ENCODE measurements at regions of chr4 and their contacts with region 1.

Region 1: DNA sequence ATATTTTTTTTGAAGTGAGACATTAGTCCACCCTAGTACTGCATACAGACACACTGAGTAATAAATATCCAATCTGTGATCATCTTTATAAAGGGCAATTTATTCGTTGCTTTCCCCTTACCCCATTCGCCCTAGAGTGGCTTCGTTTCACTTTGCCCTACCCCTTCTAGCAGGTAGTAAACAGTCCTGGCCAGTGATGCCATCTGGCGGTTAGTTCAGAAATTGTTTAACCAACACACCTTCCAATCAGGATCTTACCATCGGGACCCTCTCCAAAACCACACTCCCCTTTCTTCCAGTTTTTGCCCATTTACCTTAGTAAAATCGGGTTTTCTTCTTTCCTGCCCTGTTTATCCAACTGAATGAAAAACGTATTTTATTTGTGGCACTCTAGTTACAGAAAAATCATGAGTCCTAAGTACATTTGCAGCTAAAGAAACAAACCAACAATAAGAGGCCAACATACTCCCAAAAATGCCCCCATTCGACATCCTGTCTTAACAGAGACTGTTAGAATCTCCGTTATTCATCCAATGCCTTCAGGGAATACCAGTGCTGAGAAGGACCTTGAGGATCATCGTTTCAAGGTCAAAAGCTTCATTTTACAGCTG is 2.2 kb downstream of the PPA2 start:
- DNase-seq: peak; percentile 66
- ATAC-seq: peak; percentile 61
- H3K4me3 ChIP-seq: peak overlapping the region; percentile 93
- H3K27ac ChIP-seq: peak overlapping the region; percentile 92
- H3K4me1 ChIP-seq: no peaks in the 10 kb centered on the region
- H3K27me3 ChIP-seq: no peaks in the 10 kb centered on the region
- CTCF ChIP-seq: peak; percentile 71 to 83 (median 74)
- EP300 ChIP-seq: no peak
- POLR2A ChIP-seq: no peak
- RAD21 ChIP-seq: peak; percentile 95

Region 2: DNA sequence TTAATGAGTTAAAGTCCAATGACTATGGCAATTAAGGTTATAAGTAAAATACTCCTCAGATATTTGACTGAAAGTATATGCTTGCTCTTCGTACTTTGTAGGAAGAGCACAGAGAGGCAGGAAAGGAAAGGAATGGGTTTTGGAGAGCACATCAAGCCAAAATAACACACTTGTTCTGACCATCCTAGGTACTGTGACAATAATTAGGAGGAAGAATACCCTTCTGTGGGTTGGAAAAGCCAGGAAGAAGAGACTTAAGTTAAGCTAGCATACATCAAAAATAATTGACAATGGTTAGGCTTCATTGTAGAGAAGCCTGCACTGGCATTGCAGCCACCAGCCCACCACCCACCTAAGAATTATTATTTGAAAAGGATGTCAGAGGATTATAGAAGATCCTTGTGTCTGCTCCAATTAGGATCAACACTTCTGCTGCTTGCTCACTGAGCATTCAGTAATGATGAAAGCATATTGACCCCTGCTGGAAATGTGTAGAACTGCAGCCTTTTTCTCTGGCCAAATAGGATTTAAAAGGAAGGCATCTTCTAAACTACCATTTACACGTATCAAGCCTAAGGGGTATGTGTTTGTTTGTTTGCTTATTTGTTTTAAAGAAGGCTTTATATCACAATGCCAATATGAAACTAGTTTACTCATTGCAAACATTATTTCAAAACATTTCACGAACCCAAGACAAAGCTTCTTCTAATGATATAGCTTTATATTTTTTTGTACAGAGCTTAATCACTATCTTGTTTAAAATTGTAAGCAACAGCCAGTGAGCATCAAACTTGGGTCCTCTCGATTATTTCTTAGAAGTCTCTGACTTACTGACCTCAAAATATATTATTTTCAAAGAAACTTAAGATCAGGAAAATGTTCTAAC is 611.2 kb before region 1 on chr4:
- CTCF ChIA-PET with region 1: interaction called, 6 read pairs
- POLR2A ChIA-PET with region 1: no interaction called
- RAD21 ChIA-PET with region 1: no interaction called
- SMC1A ChIA-PET with region 1: interaction called, 4 read pairs
- in situ Hi-C with region 1: no loop called
- intact Hi-C with region 1: loop called (anchors 2 kb)
- DNase-seq: peak; percentile 72
- ATAC-seq: peak; percentile 94
- H3K4me3 ChIP-seq: no peak overlapping the region
- H3K27ac ChIP-seq: no peak overlapping the region
- H3K4me1 ChIP-seq: no peaks in the 10 kb centered on the region
- H3K27me3 ChIP-seq: no peaks in the 10 kb centered on the region
- CTCF ChIP-seq: peak; percentile 74 to 96 (median 90); a peak in 5 of 6 replicates
- EP300 ChIP-seq: no peak
- POLR2A ChIP-seq: no peak
- RAD21 ChIP-seq: peak; percentile 100

Region 3: GRCh38 chr4:105061136-105061696 is 410.5 kb before region 1 on chr4:
- CTCF ChIA-PET with region 1: interaction called, 5 read pairs
- POLR2A ChIA-PET with region 1: no interaction called
- RAD21 ChIA-PET with region 1: interaction called, 3 read pairs
- SMC1A ChIA-PET with region 1: interaction called, 3 read pairs
- in situ Hi-C with region 1: loop called (anchors 5 kb)
- intact Hi-C with region 1: loop called (anchors 2 kb)
- DNase-seq: peak; percentile 85
- ATAC-seq: peak; percentile 68
- H3K4me3 ChIP-seq: peak overlapping the region; percentile 45
- H3K27ac ChIP-seq: peak overlapping the region; percentile 94
- H3K4me1 ChIP-seq: peaks cover 47% of the 10 kb centered on the region
- H3K27me3 ChIP-seq: no peaks in the 10 kb centered on the region
- CTCF ChIP-seq: no peak
- EP300 ChIP-seq: peak in 1 of 2 experiments; percentile 50; a peak in 2 of 4 replicates
- POLR2A ChIP-seq: no peak
- RAD21 ChIP-seq: 0 out of 2 replicates have a peak, but pooled peaks have one; percentile 9

Region 4: DNA sequence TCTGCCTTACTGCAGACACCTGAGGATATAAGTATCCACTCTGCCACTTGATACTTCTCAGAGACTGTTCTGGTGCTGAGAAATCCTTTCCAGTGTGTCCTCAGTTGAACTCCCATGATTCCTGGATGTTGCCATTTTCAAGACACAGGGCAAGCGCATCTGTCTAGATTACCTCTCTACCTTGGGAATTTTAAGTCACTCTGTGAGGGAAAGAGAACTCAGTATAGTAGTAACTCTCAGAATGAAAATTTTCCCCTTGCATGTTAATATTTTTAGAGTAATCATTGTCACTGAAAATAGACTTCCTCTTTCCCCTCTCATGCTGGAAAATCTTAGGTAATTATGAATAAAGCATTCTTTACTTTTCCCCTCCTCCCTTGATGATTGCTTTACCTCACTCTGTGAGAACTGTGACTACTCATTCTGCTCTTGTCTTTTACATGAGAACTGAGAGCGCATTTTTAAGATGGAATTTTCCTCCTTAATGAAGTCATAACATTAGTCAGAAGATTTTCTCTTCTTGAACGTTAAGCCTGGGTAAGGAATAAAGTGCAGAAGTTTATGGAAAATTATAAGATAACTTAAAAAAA is 280.0 kb before region 1 on chr4:
- CTCF ChIA-PET with region 1: interaction called, 10 read pairs
- POLR2A ChIA-PET with region 1: interaction called, 5 read pairs
- RAD21 ChIA-PET with region 1: interaction called, 6 read pairs
- SMC1A ChIA-PET with region 1: interaction called, 3 read pairs
- in situ Hi-C with region 1: no loop called
- intact Hi-C with region 1: loop called (anchors 5 kb)
- DNase-seq: peak; percentile 81
- ATAC-seq: peak; percentile 65
- H3K4me3 ChIP-seq: 0 out of 2 replicates have a peak overlapping the region, but pooled peaks have one; percentile 10
- H3K27ac ChIP-seq: peak overlapping the region; percentile 81
- H3K4me1 ChIP-seq: peaks cover 46% of the 10 kb centered on the region
- H3K27me3 ChIP-seq: no peaks in the 10 kb centered on the region
- CTCF ChIP-seq: no peak
- EP300 ChIP-seq: peak in 1 of 2 experiments; percentile 72; a peak in 2 of 4 replicates
- POLR2A ChIP-seq: no peak
- RAD21 ChIP-seq: peak; percentile 34; the same call in 1 of the 2 replicates

Region 5: DNA sequence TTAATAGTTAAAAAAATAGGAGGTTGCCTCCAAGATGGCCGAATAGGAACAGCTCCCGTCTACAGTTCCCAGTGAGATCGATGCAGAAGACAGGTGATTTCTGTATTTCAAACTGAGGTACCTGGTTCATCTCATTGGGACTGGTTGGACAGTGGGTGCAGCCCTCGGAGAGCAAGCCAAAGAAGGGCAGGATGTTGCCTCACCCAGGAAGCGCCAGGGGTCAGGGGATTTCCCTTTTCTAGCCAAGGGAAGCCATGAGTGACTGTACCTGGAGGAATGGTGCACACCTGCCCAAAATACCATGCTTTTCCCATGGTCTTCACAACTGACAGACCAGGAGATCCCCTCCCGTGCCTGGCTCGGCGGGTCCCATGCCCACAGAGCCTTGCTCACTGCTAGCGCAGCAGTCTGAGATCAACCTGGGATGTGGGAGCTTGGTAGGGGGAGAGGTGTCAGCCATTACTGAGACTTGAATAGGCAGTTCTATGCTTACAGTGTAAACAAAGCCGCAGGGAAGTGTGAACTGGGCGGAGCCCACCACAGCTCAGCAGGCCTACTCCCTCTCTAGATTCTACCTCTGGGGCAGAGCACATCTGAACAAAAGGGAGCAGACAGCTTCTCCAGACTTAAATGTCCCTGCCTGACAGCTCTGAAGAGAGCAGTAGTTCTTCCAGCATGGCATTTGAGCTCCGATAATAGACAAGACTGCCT is 45.3 kb before region 1 on chr4:
- CTCF ChIA-PET with region 1: no interaction called
- POLR2A ChIA-PET with region 1: no interaction called
- RAD21 ChIA-PET with region 1: no interaction called
- SMC1A ChIA-PET with region 1: no interaction called
- in situ Hi-C with region 1: no loop called
- intact Hi-C with region 1: no loop called
- DNase-seq: no peak
- ATAC-seq: no peak
- H3K4me3 ChIP-seq: no peak overlapping the region
- H3K27ac ChIP-seq: no peak overlapping the region
- H3K4me1 ChIP-seq: no peaks in the 10 kb centered on the region
- H3K27me3 ChIP-seq: no peaks in the 10 kb centered on the region
- CTCF ChIP-seq: no peak
- EP300 ChIP-seq: no peak
- POLR2A ChIP-seq: no peak
- RAD21 ChIP-seq: no peak

Region 6: GRCh38 chr4:105461221-105461620 is 10.4 kb before region 1 on chr4:
- CTCF ChIA-PET with region 1: interaction called, 28 read pairs
- POLR2A ChIA-PET with region 1: interaction called, 3 read pairs
- RAD21 ChIA-PET with region 1: interaction called, 6 read pairs
- SMC1A ChIA-PET with region 1: interaction called, 6 read pairs
- in situ Hi-C with region 1: no loop called
- intact Hi-C with region 1: no loop called
- DNase-seq: no peak
- ATAC-seq: peak; percentile 76
- H3K4me3 ChIP-seq: no peak overlapping the region
- H3K27ac ChIP-seq: no peak overlapping the region
- H3K4me1 ChIP-seq: no peaks in the 10 kb centered on the region
- H3K27me3 ChIP-seq: no peaks in the 10 kb centered on the region
- CTCF ChIP-seq: no peak
- EP300 ChIP-seq: no peak
- POLR2A ChIP-seq: no peak
- RAD21 ChIP-seq: no peak

Region 7: GRCh38 chr4:105536599-105536998 is 64.9 kb after region 1 on chr4:
- CTCF ChIA-PET with region 1: no interaction called
- POLR2A ChIA-PET with region 1: no interaction called
- RAD21 ChIA-PET with region 1: no interaction called
- SMC1A ChIA-PET with region 1: no interaction called
- in situ Hi-C with region 1: no loop called
- intact Hi-C with region 1: no loop called
- DNase-seq: no peak
- ATAC-seq: no peak
- H3K4me3 ChIP-seq: no peak overlapping the region
- H3K27ac ChIP-seq: no peak overlapping the region
- H3K4me1 ChIP-seq: no peaks in the 10 kb centered on the region
- H3K27me3 ChIP-seq: no peaks in the 10 kb centered on the region
- CTCF ChIP-seq: no peak
- EP300 ChIP-seq: no peak
- POLR2A ChIP-seq: no peak
- RAD21 ChIP-seq: no peak

Region 8: DNA sequence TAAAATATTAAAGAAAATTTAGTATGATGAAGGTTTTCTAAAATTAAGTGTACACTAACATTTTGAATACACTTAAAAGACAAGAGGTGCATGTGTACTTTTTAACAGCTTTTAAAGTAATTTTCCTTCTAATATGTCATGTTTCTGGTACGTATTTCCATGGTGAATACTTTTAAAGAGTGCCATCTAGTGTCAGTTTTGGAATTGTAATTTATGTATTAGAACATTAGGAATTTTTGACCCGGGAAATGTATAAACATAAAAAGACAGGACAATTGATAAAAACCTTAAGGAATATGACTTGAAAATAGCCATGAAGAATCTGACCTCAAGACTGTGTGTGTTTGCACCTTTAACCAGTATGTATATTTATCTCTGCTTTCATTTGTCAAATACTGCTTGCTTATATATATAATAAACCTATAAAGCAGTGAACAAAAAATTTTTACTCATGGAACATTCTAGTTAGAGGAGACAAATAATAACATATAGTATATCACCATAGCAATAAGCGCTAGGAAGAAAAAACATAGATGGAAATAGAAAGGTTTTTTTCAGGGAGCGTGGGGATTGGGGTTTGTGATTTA is 244.1 kb after region 1 on chr4:
- CTCF ChIA-PET with region 1: interaction called, 19 read pairs
- POLR2A ChIA-PET with region 1: interaction called, 7 read pairs
- RAD21 ChIA-PET with region 1: interaction called, 19 read pairs
- SMC1A ChIA-PET with region 1: interaction called, 16 read pairs
- in situ Hi-C with region 1: no loop called
- intact Hi-C with region 1: no loop called
- DNase-seq: no peak
- ATAC-seq: 0 out of 3 replicates have a peak, but pooled peaks have one; percentile 10
- H3K4me3 ChIP-seq: no peak overlapping the region
- H3K27ac ChIP-seq: no peak overlapping the region
- H3K4me1 ChIP-seq: peaks cover 3% of the 10 kb centered on the region; the same call in 1 of the 2 replicates
- H3K27me3 ChIP-seq: no peaks in the 10 kb centered on the region
- CTCF ChIP-seq: peak; percentile 17 to 48 (median 36); a peak in 2 of 6 replicates
- EP300 ChIP-seq: no peak
- POLR2A ChIP-seq: no peak
- RAD21 ChIP-seq: peak; percentile 49

Measured in GM12878 (cell line).